Transverse colon (tissue), 4 donors: ENCODE measurements at regions of chr12 and their contacts with region 1.

Region 1: GRCh38 chr12:54142114-54142475 is 46.7 kb downstream of the SMUG1 start:
- DNase-seq: no peak
- H3K4me3 ChIP-seq: no peak overlapping the region
- H3K27ac ChIP-seq: peak overlapping the region; percentile 59 to 74 (median 66)
- H3K4me1 ChIP-seq: peaks cover 0 to 15% (median 0%) of the 10 kb centered on the region in 4 donors
- H3K27me3 ChIP-seq: peaks cover 49% of the 10 kb centered on the region
- CTCF ChIP-seq: no peak
- EP300 ChIP-seq: no peak
- POLR2A ChIP-seq: no peak

Region 2: DNA sequence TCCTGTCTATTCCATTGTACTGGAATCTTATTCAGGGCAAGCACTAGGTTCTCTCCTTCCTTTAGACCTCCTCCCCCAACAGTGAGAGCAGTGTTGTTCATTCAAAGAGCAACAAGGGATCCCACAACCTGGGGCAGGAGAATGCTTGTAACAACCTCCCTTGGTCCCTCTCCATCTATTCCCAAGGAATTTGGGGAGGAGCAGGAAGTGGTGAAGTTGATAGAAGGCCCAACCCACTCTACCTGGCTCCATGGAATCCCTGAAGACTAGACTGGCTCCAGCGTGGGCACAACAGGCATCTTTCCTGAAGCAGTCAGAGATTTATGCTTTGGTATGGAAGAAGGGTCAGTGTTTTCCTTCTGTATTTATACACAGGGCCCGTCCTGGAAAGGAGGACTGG is 356.9 kb before region 1 on chr12:
- in situ Hi-C with region 1: no loop called
- intact Hi-C with region 1: loop called (anchors 2 kb)
- DNase-seq: no peak
- H3K4me3 ChIP-seq: no peak overlapping the region
- H3K27ac ChIP-seq: no peak overlapping the region
- H3K4me1 ChIP-seq: no peaks in the 10 kb centered on the region
- H3K27me3 ChIP-seq: peaks cover 98% of the 10 kb centered on the region
- CTCF ChIP-seq: no peak
- EP300 ChIP-seq: no peak
- POLR2A ChIP-seq: no peak

Region 3: DNA sequence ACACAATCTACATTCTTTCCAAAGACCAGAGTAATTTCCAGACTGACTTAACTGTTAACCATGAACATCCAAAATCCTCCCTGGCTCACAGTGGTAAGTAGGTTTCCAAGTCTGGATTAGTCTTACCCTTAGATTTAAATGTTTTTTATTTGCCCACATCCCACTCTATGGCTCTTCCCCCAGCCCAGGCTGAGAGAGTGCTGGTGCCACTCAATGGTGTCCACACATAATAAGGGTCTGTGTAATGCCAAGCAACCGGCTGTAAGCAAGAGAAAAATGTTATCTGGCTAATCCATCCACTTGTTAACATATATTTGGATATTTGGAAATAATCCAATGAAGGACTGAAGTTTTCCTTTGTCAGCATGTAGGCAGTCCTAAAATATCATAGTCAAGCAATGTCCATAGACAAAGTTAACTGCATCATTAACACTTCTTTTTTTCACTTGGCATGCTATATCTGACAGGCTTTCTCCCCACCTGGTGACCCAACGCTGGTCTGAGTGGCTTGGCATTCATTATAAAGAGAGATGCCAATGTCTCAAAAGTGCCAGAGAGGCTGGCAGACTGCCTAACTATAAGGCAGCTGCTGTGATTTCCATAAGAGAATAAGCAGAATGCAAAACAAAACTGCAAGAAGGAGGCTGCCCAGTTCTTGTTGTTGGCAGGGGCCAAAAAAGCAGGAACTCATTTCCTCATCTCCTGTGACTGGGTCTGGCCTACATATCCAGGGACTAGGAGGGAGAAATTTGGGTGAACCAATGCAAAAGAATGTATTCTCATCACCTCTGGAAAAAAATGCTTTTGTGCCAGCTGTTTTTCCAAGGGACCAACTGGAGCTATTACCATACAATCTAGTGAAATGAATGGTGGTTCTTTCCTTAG is 217.3 kb before region 1 on chr12:
- in situ Hi-C with region 1: no loop called
- intact Hi-C with region 1: no loop called
- DNase-seq: no peak
- H3K4me3 ChIP-seq: no peak overlapping the region
- H3K27ac ChIP-seq: no peak overlapping the region
- H3K4me1 ChIP-seq: peaks cover 0 to 3% (median 0%) of the 10 kb centered on the region in 4 donors
- H3K27me3 ChIP-seq: peaks cover 99% of the 10 kb centered on the region
- CTCF ChIP-seq: no peak
- EP300 ChIP-seq: no peak
- POLR2A ChIP-seq: no peak

Region 4: GRCh38 chr12:54060975-54061778 is 80.9 kb before region 1 on chr12:
- in situ Hi-C with region 1: no loop called
- intact Hi-C with region 1: no loop called
- DNase-seq: no peak
- H3K4me3 ChIP-seq: no peak overlapping the region
- H3K27ac ChIP-seq: no peak overlapping the region
- H3K4me1 ChIP-seq: no peaks in the 10 kb centered on the region
- H3K27me3 ChIP-seq: peaks cover 100% of the 10 kb centered on the region
- CTCF ChIP-seq: no peak
- EP300 ChIP-seq: no peak
- POLR2A ChIP-seq: no peak